AG04449 (cell line): ENCODE measurements at regions of chr2 and their contacts with region 1.

Region 1: DNA sequence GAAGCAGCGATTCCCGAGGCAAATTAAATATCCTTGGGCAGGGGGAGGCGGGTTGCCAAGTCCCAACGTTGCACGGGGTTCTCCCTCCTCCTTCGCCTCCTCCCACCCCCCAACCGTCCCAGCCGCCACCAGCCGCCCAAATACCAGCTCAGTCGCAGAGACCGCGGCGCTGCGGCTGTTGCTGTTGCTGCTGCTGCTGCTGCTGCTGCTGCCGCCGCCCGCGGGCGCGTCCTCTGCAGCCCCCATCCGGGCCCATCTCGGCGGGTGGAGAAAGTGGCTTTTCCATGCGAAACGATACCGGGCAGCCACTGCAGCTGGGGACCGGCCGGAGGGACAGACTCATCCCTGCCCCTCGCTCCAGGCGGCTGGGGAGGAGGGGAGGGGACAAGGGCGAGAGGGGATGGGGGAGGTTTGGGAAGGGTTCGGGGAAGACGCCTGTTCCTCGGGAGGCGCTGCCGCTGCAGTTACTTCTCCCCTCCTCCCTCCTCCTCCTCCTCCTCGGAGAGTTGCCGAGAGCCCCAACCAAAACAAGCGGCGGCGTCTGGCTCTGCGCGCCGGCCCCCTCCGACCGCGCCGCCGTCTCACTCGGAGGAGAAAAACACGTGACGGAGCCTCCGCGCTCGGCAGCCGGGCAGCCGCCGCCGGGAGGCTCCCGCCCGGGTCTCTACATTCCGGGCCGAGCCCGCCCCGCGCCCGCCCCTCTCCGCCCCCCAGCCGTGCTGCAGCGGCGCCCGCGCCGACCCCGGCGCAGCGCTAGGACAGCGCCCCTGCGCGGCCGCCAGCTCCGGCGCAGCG is at the start of gene IRS1:
- DNase-seq: no peak
- H3K4me3 ChIP-seq: peak within 1 kb of the TSS; percentile 83
- CTCF ChIP-seq: peak; percentile 33

Region 2: GRCh38 chr2:225678792-225679191 is 1120.6 kb before region 1 on chr2:
- CTCF ChIA-PET with region 1: interaction called, 14 read pairs
- POLR2A ChIA-PET with region 1: interaction called, 3 read pairs
- DNase-seq: no peak
- H3K4me3 ChIP-seq: no peak overlapping the region
- CTCF ChIP-seq: no peak

Region 3: DNA sequence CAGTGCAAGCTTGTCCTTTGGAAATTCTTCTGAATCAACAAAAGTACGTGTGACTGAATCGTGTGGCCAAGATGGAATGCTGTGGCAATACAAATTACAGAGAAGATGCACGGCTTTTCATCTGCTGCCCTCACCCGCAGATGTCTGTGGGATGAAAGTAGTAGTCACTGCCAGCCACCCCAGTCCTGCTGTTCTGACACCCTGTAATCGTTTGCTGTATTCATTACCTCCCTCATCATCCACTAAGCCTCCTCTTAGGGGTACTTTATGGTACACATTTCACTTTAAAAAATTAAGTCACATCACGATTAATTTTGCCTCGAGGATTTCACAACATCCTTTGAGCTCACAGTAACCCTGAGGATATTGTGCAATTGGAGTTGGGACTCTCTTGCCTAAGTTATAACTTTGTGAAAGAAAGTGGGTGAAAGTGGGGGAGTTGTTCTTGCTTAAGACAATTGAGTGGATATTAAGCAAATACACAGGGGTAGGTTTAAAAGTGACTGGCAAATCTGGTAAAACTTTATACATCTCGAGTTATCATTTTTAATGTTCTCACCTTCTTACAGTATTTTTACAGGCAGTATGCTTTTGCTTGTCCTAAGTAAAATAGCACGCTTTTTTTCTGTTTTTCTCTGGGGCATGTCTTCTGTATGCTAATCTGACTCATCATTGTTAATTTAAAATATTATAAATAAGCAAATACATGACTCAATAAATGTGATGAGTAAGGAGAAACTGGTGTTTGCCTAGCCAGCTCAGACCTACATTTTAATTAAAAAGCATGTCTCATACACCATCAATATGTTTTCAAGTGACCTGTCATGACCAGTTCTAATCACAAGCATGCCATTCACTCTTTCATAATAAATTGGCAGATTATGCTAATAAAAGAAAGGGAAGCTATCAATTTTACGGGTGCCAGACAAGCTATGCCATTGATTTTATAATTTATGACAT is 680.6 kb before region 1 on chr2:
- CTCF ChIA-PET with region 1: interaction called, 15 read pairs
- POLR2A ChIA-PET with region 1: no interaction called
- DNase-seq: peak; percentile 73
- H3K4me3 ChIP-seq: peak overlapping the region; percentile 19; the same call in 1 of the 2 replicates
- CTCF ChIP-seq: no peak

Region 4: DNA sequence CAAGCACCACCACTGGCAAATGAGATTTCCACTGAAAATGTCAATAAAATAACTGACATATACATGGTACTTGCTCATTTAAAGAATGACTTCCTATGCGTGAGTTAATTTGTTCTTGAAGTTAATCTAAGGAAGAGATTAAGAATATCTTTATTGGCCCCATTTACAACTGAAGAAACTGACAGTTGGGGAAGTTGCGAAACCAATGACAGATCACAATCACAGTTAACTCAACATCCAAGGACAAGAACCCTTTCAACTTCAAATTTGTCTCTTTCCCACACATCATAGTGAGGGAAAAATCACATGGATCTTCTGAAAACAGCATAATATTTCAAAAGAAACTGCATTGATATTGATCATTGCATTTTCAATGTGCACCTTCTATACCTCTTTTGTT is 565.2 kb before region 1 on chr2:
- CTCF ChIA-PET with region 1: no interaction called
- POLR2A ChIA-PET with region 1: no interaction called
- DNase-seq: no peak
- H3K4me3 ChIP-seq: no peak overlapping the region
- CTCF ChIP-seq: no peak

Region 5: DNA sequence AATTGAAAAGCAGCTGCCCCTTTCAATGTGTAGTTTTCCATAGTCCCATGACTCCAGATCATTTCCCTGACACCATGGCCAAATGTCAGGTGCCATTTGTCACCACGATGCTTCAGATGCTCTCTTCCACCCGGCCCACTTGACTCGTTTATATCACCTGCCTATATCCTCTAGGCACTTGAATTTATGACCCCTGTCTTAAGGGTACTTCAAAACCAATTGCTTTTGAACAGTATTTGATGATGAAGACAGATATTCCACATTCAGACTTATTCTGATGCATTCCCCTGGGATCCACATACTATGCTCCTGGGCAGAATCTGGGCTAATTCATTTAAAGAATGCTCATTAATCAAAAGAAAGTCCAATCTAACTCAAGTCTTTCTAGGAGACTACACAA is 19.6 kb after region 1 on chr2:
- CTCF ChIA-PET with region 1: interaction called, 14 read pairs
- POLR2A ChIA-PET with region 1: no interaction called
- DNase-seq: no peak
- H3K4me3 ChIP-seq: no peak overlapping the region
- CTCF ChIP-seq: no peak

Region 6: DNA sequence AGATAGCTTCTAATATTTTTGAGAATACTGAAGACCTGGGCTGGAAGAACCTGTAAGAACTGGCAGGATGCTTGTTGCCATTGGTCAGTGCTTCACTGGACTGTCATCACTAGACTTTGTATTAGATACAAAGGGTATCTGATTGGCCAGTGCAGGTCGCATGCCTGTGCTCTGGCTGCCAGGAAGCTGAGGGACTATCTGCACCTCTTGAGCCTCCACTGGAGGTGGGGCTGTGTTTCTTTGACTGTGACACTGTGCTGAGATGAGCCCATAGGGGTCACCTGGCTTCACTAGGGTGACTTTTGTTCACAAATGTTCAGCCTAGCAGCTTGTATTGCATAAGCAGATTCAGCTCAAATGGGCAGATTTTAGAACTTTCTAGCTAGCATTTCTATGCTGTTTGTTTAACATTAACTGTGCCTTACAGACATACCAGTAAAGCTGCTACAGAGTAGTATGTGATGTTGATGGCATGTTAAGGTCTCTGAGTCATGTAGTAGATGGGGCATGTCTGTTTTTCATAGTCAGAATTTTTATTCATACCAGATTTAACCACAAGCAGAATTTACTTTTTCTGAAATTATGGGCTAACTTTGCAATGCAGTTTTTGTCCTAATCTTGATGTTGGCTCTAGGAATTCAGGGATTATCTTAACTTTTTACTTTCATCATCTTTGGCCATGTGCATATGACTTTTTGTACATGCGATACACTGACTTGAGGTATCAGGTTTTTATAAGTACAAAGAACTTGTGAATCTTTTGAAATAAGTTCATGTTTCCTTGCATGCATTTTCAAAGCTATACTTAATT is 92.6 kb after region 1 on chr2:
- CTCF ChIA-PET with region 1: no interaction called
- POLR2A ChIA-PET with region 1: no interaction called
- DNase-seq: peak; percentile 92
- H3K4me3 ChIP-seq: no peak overlapping the region
- CTCF ChIP-seq: no peak

Region 7: DNA sequence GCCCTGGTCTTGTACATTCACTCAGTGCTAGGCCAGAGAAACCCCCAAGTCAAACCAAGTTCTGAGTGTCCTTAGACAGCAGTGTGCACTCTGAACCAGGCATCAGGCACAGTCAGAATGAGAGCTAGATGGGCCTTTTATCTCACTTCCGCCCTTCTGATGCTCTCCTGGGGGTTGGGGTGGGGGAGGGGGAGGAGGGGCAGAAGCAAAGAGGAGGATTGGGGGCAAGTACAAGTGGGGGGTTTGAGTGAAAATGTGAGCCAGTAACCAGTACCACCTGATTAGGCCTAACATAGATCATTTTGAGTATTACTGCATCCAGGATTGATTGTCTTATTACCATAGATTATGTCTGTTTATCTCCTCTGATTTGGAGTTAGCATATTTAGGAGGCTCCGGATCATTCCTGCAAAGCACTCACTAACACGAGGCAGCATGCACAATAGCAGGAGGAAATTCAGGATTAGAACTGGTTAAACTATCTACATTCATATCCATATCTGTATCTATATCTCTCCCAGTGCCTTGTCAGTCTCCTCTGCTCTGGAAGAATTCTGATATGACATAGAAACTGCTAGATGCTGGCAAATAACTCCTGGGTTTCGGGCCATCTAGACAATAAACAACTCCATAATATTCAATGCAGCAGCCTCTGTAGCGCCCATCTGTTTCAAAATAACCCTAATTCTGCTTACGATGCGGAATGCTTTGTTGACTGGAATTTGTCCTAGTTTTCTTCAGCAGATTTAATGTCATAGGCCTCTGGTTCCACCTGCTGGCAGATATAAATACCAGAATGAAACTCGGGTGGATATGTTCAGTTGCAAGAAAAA is 185.6 kb after region 1 on chr2:
- CTCF ChIA-PET with region 1: interaction called, 117 read pairs
- POLR2A ChIA-PET with region 1: no interaction called
- DNase-seq: peak; percentile 56
- H3K4me3 ChIP-seq: no peak overlapping the region
- CTCF ChIP-seq: peak; percentile 45